ENCODE measurements at regions of chr22 and their contacts with region 1.

Region 1: GRCh38 chr22:32474635-32475467 is at the start of gene FBXO7:
- DNase-seq: peak; percentile 90
- H3K4me3 Mint-ChIP-seq: peak within 1 kb of the TSS; percentile 85
- H3K27ac Mint-ChIP-seq: peak within 1 kb of the TSS; percentile 90
- H3K4me1 Mint-ChIP-seq: peaks cover 21% of the 10 kb centered on the region
- H3K27me3 Mint-ChIP-seq: no peaks in the 10 kb centered on the region
- total RNA-seq, gene FBXO7: 79.5 to 83.3 TPM

Region 2: DNA sequence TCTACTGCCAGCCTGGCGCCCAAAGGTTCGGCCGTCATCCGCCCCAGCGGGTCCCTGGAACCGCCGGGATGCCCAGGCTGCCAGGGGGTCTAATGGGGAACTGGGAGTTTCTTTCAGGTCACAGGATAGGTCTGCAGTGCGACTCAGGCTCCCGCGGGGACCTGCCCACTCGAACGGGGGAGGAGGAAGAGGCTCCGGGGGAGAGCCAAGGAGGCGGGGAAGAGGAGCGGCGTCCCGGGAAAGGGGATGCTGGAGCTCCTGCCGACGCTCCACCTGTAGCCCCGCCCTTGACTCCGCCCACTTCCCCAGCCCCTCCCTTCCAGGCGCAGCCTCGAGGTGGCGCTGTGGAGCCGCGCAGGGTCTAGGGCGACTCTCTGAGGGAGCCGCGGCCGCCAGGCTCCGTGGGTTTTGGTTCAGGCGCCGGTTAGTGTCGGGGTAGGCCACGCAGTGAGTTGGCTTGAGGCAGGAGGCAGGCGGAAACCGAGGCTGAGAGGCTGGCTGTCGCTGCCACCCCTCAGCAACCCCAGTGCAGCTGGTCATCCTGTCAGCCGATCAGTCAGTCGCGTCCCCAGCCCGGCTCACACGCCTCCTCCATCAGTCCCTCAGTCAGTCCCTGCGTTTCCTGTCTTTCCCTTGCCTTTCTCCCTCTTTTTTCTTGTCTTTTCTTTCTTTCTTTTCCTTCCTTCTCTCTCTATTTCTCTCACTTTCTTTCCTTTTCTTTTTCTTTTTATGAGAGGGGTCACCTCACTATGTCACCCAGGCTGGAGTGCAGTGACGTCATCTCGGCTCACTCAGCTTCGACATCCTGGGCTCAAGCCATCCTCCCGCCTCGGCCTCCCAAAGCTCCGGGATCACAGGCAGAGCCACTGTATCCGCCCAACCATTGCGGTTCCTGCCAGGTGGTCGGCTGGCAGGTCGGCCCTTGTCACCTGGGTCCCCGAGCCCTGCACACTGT is 504.1 kb before region 1 on chr22:
- CTCF ChIA-PET with region 1: interaction called, 8 read pairs
- POLR2A ChIA-PET with region 1: no interaction called
- intact Hi-C with region 1: loop called (anchors 5 kb)
- DNase-seq: peak; percentile 92
- H3K4me3 Mint-ChIP-seq: peak overlapping the region; percentile 72
- H3K27ac Mint-ChIP-seq: no peak overlapping the region
- H3K4me1 Mint-ChIP-seq: peaks cover 12% of the 10 kb centered on the region
- H3K27me3 Mint-ChIP-seq: no peaks in the 10 kb centered on the region

Region 3: DNA sequence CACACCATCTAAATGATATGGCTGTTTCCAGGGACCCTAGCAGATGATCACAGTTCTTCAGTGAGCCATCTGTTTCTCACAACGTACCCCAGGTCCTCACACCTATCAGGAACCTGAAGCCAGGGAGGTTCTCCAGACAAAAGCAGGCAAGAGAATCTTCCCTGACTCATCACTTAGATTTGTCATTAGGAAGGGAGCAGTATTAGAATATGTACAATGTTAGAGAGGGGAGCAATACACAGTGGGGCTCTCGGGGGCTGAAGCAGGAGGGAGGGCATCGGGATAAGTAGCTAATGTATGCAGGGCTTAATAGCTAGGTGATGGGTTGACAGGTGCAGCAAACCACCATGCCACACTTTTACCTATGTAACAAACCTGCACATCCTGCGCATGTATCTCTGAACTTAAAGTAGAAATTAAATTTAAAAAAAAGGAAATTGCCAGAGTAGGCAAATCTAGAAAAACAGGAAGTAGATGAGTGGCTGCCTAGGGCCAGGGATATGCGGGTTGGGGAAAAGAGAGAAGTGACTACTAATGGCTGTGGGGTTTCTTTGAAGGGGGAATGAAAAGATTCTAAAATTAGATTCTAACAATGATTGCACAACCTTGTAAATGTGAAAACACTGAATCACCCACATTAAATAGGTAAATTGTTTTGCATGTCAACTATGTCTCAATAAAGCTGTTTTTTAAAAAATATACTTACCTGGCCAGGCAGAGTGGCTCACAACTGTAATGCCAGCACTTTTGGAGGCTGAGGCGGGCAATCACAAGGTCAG is 330.2 kb before region 1 on chr22:
- CTCF ChIA-PET with region 1: interaction called, 3 read pairs
- POLR2A ChIA-PET with region 1: no interaction called
- intact Hi-C with region 1: loop called (anchors 1 kb)
- DNase-seq: peak; percentile 26
- H3K4me3 Mint-ChIP-seq: no peak overlapping the region
- H3K27ac Mint-ChIP-seq: peak overlapping the region; percentile 92
- H3K4me1 Mint-ChIP-seq: peaks cover 46% of the 10 kb centered on the region
- H3K27me3 Mint-ChIP-seq: no peaks in the 10 kb centered on the region

Region 4: GRCh38 chr22:32265882-32266767 is 208.7 kb before region 1 on chr22:
- CTCF ChIA-PET with region 1: interaction called, 5 read pairs
- POLR2A ChIA-PET with region 1: no interaction called
- intact Hi-C with region 1: loop called (anchors 1 kb)
- DNase-seq: peak; percentile 83
- H3K4me3 Mint-ChIP-seq: no peak overlapping the region
- H3K27ac Mint-ChIP-seq: no peak overlapping the region
- H3K4me1 Mint-ChIP-seq: peaks cover 9% of the 10 kb centered on the region
- H3K27me3 Mint-ChIP-seq: peaks cover 9% of the 10 kb centered on the region

Region 5: DNA sequence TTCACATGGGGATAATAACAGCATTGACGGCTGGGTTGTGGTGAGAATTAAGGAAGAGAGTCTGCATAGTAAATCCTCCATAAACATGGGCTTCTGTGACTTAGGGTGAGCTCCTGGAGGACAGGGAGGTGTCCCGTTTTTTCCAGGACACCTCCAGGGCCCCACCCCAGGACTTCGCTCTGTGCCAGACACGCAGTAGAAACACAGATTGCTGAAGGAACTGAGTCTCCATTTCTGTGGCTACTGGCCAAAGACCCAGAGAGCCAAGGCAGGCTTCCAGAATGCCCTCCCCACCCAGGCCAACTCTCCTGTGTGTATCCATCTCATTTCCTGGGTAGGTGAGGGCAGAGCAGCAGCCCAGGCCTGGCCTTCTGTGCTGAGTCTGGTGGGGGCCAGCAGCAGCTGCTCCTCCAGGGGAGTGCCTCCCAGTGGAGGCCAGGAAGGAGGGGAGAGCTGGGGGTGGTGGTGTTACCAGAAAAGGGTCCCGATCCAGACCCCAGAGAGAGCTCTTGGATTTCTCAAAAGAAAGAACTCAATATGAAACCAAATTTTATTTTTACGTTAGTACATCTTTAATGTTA is 126.7 kb before region 1 on chr22:
- CTCF ChIA-PET with region 1: no interaction called
- POLR2A ChIA-PET with region 1: no interaction called
- intact Hi-C with region 1: no loop called
- DNase-seq: no peak
- H3K4me3 Mint-ChIP-seq: no peak overlapping the region
- H3K27ac Mint-ChIP-seq: no peak overlapping the region
- H3K4me1 Mint-ChIP-seq: no peaks in the 10 kb centered on the region
- H3K27me3 Mint-ChIP-seq: peaks cover 13% of the 10 kb centered on the region

Measured in activated CD4-positive, alpha-beta memory T cell treated with anti-CD3 and anti-CD28 coated beads for 36 hours (primary cell).